Activated CD4-positive, alpha-beta memory T cell treated with anti-CD3 and anti-CD28 coated beads for 36 hours (primary cell): ENCODE measurements at regions of chr3 and their contacts with region 1.

Region 1: DNA sequence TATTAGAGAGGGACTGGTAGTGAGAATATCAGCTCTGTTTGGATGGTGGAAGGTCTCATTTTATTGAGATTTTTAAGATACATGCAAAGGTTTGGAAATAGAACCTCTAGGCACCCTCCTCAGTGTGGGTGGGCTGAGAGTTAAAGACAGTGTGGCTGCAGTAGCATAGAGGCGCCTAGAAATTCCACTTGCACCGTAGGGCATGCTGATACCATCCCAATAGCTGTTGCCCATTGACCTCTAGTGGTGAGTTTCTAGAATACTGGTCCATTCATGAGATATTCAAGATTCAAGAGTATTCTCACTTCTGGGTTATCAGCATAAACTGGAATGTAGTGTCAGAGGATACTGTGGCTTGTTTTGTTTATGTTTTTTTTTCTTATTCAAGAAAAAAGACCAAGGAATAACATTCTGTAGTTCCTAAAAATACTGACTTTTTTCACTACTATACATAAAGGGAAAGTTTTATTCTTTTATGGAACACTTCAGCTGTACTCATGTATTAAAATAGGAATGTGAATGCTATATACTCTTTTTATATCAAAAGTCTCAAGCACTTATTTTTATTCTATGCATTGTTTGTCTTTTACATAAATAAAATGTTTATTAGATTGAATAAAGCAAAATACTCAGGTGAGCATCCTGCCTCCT is 87.2 kb downstream of the TGFBR2 start:
- DNase-seq: peak; percentile 44
- H3K4me3 Mint-ChIP-seq: no peak overlapping the region
- H3K27ac Mint-ChIP-seq: peak overlapping the region; percentile 35
- H3K4me1 Mint-ChIP-seq: peaks cover 43% of the 10 kb centered on the region
- H3K27me3 Mint-ChIP-seq: no peaks in the 10 kb centered on the region

Region 2: DNA sequence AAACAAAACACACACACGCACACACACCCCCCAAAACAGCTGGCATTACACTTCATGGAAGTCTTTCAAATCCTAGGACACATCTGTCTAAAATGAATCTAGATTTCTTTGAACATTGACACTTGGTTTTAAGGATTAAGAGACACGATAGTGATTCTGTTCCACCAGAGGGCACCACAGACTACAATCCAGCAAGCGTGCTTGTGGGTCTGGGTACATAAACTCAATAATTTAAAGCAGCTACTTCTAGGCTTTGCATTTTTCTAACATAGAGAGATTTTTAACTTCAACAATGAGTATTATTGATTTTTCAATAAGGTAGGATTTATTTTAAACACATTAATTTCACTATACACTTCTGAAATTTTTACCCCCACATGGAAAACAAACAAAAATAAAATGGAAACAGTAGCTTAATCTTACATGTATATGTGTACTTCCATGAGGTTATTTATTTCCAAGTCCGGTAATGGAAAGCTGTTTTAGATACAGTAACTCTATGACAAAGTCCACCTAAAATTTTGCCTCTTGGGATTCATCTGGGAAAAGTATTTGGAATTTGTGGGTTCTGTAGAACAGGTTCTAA is 651.2 kb before region 1 on chr3:
- CTCF ChIA-PET with region 1: interaction called, 5 read pairs
- POLR2A ChIA-PET with region 1: no interaction called
- intact Hi-C with region 1: loop called (anchors 1 kb)
- DNase-seq: peak; percentile 58
- H3K4me3 Mint-ChIP-seq: no peak overlapping the region
- H3K27ac Mint-ChIP-seq: no peak overlapping the region
- H3K4me1 Mint-ChIP-seq: no peaks in the 10 kb centered on the region
- H3K27me3 Mint-ChIP-seq: peaks cover 21% of the 10 kb centered on the region

Region 3: DNA sequence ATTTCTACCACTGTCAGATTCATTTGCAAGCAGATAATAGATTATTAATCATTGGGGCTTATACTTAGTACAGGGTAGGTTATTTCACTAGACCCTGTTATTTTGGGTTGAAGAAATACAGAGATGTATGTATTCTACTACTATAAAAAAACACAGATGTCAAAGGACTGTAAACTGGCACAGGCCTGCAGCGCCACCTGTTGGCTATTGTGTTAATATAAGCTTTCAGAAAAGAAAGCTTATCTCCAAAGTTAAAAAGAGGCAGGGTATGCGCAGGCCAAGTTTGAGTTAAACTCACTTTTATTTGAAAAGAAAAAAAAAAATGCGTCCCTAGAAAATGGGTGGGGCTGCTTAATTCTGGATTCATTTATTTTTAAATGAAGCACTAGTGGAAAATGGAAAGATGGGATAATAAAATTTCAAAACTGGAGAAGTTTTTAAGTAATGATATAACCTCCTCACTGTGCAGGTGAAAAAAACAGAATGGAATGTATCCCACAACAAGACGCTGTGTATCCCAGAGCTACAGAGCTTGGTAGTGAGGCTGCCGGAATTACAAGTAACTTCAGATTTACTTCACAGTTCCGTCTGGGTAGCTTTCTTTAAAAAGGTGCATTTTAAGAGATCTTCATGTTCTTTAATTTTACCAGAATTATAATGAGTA is 494.4 kb before region 1 on chr3:
- CTCF ChIA-PET with region 1: interaction called, 21 read pairs
- POLR2A ChIA-PET with region 1: no interaction called
- intact Hi-C with region 1: loop called (anchors 5 kb)
- DNase-seq: peak; percentile 74
- H3K4me3 Mint-ChIP-seq: no peak overlapping the region
- H3K27ac Mint-ChIP-seq: no peak overlapping the region
- H3K4me1 Mint-ChIP-seq: no peaks in the 10 kb centered on the region
- H3K27me3 Mint-ChIP-seq: peaks cover 2% of the 10 kb centered on the region

Region 4: GRCh38 chr3:30353711-30354467 is 339.7 kb before region 1 on chr3:
- CTCF ChIA-PET with region 1: interaction called, 18 read pairs
- POLR2A ChIA-PET with region 1: no interaction called
- intact Hi-C with region 1: no loop called
- DNase-seq: peak; percentile 64
- H3K4me3 Mint-ChIP-seq: peak overlapping the region; percentile 17
- H3K27ac Mint-ChIP-seq: no peak overlapping the region
- H3K4me1 Mint-ChIP-seq: peaks cover 56% of the 10 kb centered on the region
- H3K27me3 Mint-ChIP-seq: peaks cover 20% of the 10 kb centered on the region

Region 5: GRCh38 chr3:30567139-30567753 is 126.3 kb before region 1 on chr3:
- CTCF ChIA-PET with region 1: no interaction called
- POLR2A ChIA-PET with region 1: no interaction called
- intact Hi-C with region 1: no loop called
- DNase-seq: no peak
- H3K4me3 Mint-ChIP-seq: no peak overlapping the region
- H3K27ac Mint-ChIP-seq: no peak overlapping the region
- H3K4me1 Mint-ChIP-seq: no peaks in the 10 kb centered on the region
- H3K27me3 Mint-ChIP-seq: no peaks in the 10 kb centered on the region

Region 6: GRCh38 chr3:30606301-30607031 is 87.1 kb before region 1 on chr3 and contains the start of gene TGFBR2:
- CTCF ChIA-PET with region 1: interaction called, 12 read pairs
- POLR2A ChIA-PET with region 1: no interaction called
- intact Hi-C with region 1: no loop called
- DNase-seq: peak; percentile 92
- H3K4me3 Mint-ChIP-seq: peak within 1 kb of the TSS; percentile 87
- H3K27ac Mint-ChIP-seq: peak within 1 kb of the TSS; percentile 96
- H3K4me1 Mint-ChIP-seq: peaks cover 53% of the 10 kb centered on the region
- H3K27me3 Mint-ChIP-seq: no peaks in the 10 kb centered on the region
- total RNA-seq, gene TGFBR2: 36.8 to 37.0 TPM

Region 7: DNA sequence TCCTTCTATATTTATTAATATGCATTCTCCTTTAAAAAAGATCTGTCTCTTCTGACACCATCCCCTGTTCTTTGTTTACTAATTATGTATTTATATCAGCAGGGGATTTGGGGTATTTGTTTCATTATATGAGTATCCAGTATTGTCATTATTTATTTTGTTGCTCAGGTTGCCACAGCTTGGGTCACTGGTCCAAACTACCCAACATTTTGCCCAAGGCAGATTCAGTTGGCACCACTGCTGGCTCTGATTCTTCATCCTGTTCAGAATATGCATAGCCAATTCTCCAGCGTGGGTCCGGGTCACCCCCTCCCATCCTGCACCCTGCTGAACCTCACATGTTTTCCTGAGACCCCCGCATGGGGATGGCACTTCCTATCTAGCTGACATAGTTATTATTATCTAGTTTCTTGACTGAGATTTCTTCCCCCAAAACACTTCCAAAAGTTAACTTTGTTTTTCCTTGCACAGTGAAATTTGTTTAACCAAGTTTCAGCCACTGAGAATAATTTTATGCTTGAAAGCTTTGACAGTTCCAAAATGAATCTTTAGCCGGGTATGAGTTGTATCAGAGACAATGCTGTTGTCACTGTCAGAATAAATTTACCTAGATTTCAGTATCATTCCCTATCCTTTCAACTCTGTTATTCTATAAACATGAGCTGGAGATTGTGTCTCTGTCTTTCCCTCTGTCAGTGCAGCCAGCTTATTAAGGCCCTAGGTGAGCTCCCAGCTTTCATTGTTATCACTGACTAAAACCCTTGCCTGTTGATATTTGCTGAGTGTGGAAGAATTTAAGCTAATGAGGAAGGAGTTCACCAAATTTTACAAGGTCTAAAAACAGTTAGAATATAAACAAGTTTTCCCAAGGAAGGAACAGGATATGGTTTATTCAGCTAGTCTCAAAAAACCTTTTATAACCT is 16.9 kb before region 1 on chr3:
- CTCF ChIA-PET with region 1: interaction called, 15 read pairs
- POLR2A ChIA-PET with region 1: no interaction called
- intact Hi-C with region 1: no loop called
- DNase-seq: no peak
- H3K4me3 Mint-ChIP-seq: peak overlapping the region; percentile 10
- H3K27ac Mint-ChIP-seq: peak overlapping the region; percentile 28
- H3K4me1 Mint-ChIP-seq: peaks cover 85% of the 10 kb centered on the region
- H3K27me3 Mint-ChIP-seq: no peaks in the 10 kb centered on the region